HepG2 (cell line): ENCODE measurements at regions of chr4 and their contacts with region 1.

Region 1: DNA sequence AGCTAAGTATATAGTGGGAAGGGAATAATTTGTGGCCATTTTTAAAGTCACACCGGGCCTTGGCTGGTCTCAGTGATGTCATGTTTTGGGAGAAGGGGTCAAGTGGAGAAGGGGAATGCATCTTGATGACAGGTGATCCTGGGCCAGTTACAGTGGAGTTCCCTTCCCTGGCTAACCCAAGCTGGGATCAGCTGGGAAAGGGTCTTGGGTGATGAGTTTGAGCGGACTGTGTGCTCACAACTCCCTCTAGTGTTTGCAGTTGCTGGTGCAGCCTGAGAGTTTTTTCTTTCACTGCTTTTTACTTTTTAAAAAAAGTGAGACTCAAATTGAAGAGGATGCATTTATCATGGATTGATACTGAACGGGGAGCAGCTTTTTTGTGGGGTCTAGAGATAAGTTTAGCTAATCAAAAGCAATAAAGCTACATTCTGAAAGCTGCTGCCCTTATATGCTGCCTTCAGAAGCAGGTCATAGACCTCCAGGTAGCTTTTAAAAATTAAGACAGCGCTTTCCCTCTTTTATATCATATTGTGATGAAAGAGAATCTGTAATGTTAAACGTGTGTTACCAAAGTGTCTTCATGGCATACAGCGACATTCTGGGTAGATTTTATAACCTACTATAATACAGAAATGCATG is 164.7 kb downstream of the DCLK2 start:
- DNase-seq: no peak
- ATAC-seq: peak; percentile 74
- H3K4me3 ChIP-seq: no peak overlapping the region
- H3K27ac ChIP-seq: no peak overlapping the region
- H3K4me1 ChIP-seq: no peaks in the 10 kb centered on the region
- H3K27me3 ChIP-seq: no peaks in the 10 kb centered on the region
- CTCF ChIP-seq: peak; percentile 78
- EP300 ChIP-seq: no peak
- POLR2A ChIP-seq: no peak
- RAD21 ChIP-seq: 0 out of 2 replicates have a peak, but pooled peaks have one; percentile 20

Region 2: GRCh38 chr4:149980941-149981340 is 262.0 kb before region 1 on chr4:
- CTCF ChIA-PET with region 1: interaction called, 11 read pairs
- POLR2A ChIA-PET with region 1: no interaction called
- in situ Hi-C with region 1: no loop called
- intact Hi-C with region 1: loop called (anchors 2 kb)
- DNase-seq: peak; percentile 26
- ATAC-seq: peak; percentile 65
- H3K4me3 ChIP-seq: no peak overlapping the region
- H3K27ac ChIP-seq: no peak overlapping the region
- H3K4me1 ChIP-seq: no peaks in the 10 kb centered on the region
- H3K27me3 ChIP-seq: no peaks in the 10 kb centered on the region; a peak in 1 of 5 replicates
- CTCF ChIP-seq: peak; percentile 72
- EP300 ChIP-seq: no peak
- POLR2A ChIP-seq: no peak
- RAD21 ChIP-seq: peak; percentile 21; the same call in 1 of the 2 replicates

Region 3: DNA sequence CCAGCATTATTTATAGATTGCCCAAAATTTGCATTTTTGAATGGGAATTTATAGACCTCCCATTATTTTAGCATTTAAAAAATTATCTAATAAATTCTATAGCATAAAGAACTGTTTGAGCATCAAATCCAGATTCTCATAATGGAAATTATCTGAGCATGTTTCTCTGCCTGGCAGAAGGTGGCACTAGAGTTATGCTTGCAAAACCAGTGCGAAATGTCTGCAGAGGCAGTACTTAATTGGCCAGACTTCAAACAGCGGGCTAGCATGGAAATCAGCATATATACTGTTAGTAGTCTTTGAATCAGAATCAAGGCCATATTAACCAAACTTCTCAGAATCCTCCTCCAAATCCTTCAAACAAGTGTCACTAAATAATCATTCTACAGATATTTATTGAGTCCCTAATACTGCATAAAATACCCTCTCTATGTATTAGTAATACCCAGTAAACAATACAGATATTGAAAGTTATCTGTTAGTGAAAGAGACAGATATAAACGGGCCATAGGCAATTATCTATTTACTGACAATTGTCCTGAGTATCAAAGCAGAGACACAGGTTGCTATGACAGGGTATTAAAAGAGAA is 243.4 kb before region 1 on chr4:
- CTCF ChIA-PET with region 1: interaction called, 3 read pairs
- POLR2A ChIA-PET with region 1: no interaction called
- in situ Hi-C with region 1: no loop called
- intact Hi-C with region 1: loop called (anchors 5 kb)
- DNase-seq: peak; percentile 32
- ATAC-seq: peak; percentile 73
- H3K4me3 ChIP-seq: no peak overlapping the region
- H3K27ac ChIP-seq: no peak overlapping the region
- H3K4me1 ChIP-seq: peaks cover 12% of the 10 kb centered on the region
- H3K27me3 ChIP-seq: no peaks in the 10 kb centered on the region; a peak in 1 of 5 replicates
- CTCF ChIP-seq: peak; percentile 67
- EP300 ChIP-seq: no peak
- POLR2A ChIP-seq: no peak
- RAD21 ChIP-seq: peak; percentile 51; the same call in 1 of the 2 replicates